Activated naive CD8-positive, alpha-beta T cell treated with anti-CD3 and anti-CD28 coated beads, Interleukin-2, amount 10 ng/mL, durations not matched to agents 7 days and 5 days (primary cell): ENCODE measurements at regions of chr3 and their contacts with region 1.

Region 1: DNA sequence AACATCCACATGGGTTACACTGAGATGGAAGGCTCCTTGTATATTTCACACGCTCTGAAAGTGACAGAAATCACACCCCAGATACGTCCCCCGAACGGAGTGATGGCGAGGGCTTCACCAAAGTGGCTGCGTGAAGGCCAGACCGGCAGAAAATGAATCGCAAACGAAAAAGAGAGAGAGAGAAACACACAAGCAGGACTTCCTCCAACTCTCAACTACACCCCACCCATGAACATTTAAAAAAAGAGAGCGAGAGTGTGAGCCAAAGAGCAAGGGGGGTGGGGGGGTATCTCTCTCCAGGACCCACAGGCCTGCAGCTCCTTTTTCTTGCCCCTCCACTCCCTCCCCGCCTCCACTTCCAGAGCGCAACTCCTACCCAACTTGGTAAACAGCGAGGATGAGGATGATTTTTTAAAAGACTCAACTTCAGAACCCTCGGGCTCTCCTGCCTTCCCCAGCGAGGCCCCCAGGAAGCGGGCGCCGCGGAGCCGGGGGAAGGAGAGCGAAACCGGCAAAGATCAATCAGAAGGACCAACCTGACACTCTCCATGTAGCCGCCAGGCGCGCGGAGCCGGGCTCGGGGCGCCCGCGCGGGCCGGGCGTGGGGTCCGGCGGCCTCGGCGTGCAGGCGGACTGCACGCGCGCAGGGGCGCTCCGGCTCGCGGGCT is 519.1 kb downstream of the FOXP1 start:
- DNase-seq: peak; percentile 84
- ATAC-seq: peak; percentile 46
- H3K4me3 Mint-ChIP-seq: no peak overlapping the region
- H3K27ac Mint-ChIP-seq: no peak overlapping the region
- H3K4me1 Mint-ChIP-seq: peaks cover 49% of the 10 kb centered on the region
- H3K27me3 Mint-ChIP-seq: no peaks in the 10 kb centered on the region

Region 2: GRCh38 chr3:70916375-70917065 is 147.9 kb before region 1 on chr3:
- POLR2A ChIA-PET with region 1: no interaction called
- DNase-seq: no peak
- ATAC-seq: no peak
- H3K4me3 Mint-ChIP-seq: no peak overlapping the region
- H3K27ac Mint-ChIP-seq: no peak overlapping the region
- H3K4me1 Mint-ChIP-seq: no peaks in the 10 kb centered on the region
- H3K27me3 Mint-ChIP-seq: peaks cover 2% of the 10 kb centered on the region

Region 3: GRCh38 chr3:71010726-71011455 is 53.5 kb before region 1 on chr3:
- POLR2A ChIA-PET with region 1: interaction called, 17 read pairs
- DNase-seq: peak; percentile 45
- ATAC-seq: peak; percentile 88
- H3K4me3 Mint-ChIP-seq: peak overlapping the region; percentile 81
- H3K27ac Mint-ChIP-seq: peak overlapping the region; percentile 95
- H3K4me1 Mint-ChIP-seq: peaks cover 54% of the 10 kb centered on the region
- H3K27me3 Mint-ChIP-seq: no peaks in the 10 kb centered on the region

Region 4: DNA sequence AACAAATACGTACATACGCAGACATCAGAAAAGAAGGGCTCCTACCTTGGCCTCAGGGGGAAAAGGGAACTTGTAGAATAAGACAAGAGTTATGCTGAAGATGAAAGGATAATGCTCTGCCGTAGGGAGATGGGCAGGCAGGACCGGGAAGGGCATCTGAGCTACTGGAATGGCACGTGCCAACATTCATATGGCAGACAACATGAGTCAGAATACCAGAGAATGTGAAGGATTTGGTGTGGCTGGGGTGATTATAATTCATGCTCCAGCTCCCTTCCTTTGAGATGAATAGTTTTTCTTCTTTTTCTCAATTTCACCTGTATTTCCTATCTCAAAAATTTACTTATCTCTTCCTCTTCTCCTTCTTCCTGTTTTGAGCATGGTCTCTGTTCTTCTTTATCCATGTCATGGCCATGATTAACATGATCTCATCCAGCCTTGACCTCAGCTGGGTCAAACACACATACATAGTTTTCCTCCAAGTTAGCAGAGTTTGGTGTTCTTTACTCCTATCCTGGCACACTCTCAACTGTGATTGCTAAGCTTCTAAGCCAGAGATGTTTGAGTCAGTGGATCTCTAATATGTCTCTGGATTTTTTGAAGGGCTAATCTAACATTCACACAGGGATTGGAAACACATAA is 12.1 kb after region 1 on chr3:
- POLR2A ChIA-PET with region 1: no interaction called
- DNase-seq: no peak
- ATAC-seq: no peak
- H3K4me3 Mint-ChIP-seq: no peak overlapping the region
- H3K27ac Mint-ChIP-seq: peak overlapping the region; percentile 53
- H3K4me1 Mint-ChIP-seq: peaks cover 66% of the 10 kb centered on the region
- H3K27me3 Mint-ChIP-seq: no peaks in the 10 kb centered on the region

Region 5: GRCh38 chr3:71130471-71131374 is 66.3 kb after region 1 on chr3:
- POLR2A ChIA-PET with region 1: interaction called, 45 read pairs
- DNase-seq: peak; percentile 60
- ATAC-seq: peak; percentile 75
- H3K4me3 Mint-ChIP-seq: peak overlapping the region; percentile 86
- H3K27ac Mint-ChIP-seq: peak overlapping the region; percentile 95
- H3K4me1 Mint-ChIP-seq: peaks cover 50% of the 10 kb centered on the region
- H3K27me3 Mint-ChIP-seq: no peaks in the 10 kb centered on the region